ENCODE measurements at regions of chr5 and their contacts with region 1.

Region 1: GRCh38 chr5:134851307-134851923 is 5.6 kb downstream of the C5orf24 start:
- DNase-seq: peak; percentile 81
- H3K4me3 Mint-ChIP-seq: no peak overlapping the region
- H3K27ac Mint-ChIP-seq: peak overlapping the region; percentile 18
- H3K4me1 Mint-ChIP-seq: peaks cover 7% of the 10 kb centered on the region
- H3K27me3 Mint-ChIP-seq: no peaks in the 10 kb centered on the region
- CTCF ChIP-seq: peak; percentile 58

Region 2: DNA sequence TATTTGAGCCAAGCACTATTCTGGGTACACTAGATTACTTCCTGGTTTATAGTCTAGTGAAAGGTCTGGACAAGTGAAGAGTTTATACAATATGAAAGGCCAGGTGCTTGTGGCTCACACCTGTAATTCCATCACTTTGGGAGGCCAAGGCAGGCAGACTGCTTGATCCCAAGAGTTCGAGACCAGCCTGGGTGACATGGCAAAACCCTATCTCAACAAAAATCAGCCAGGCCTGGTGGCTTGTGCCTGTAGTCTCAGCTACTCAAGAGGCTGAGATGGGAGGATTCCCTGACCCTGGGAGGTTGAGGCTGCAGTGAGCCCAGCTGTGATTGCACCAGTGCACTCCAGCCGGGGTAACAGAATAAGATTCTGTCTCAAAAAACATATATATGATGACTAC is 13.3 kb after region 1 on chr5:
- CTCF ChIA-PET with region 1: interaction called, 13 read pairs
- POLR2A ChIA-PET with region 1: interaction called, 13 read pairs
- intact Hi-C with region 1: no loop called
- DNase-seq: no peak
- H3K4me3 Mint-ChIP-seq: no peak overlapping the region
- H3K27ac Mint-ChIP-seq: no peak overlapping the region
- H3K4me1 Mint-ChIP-seq: no peaks in the 10 kb centered on the region
- H3K27me3 Mint-ChIP-seq: no peaks in the 10 kb centered on the region
- CTCF ChIP-seq: no peak

Region 3: DNA sequence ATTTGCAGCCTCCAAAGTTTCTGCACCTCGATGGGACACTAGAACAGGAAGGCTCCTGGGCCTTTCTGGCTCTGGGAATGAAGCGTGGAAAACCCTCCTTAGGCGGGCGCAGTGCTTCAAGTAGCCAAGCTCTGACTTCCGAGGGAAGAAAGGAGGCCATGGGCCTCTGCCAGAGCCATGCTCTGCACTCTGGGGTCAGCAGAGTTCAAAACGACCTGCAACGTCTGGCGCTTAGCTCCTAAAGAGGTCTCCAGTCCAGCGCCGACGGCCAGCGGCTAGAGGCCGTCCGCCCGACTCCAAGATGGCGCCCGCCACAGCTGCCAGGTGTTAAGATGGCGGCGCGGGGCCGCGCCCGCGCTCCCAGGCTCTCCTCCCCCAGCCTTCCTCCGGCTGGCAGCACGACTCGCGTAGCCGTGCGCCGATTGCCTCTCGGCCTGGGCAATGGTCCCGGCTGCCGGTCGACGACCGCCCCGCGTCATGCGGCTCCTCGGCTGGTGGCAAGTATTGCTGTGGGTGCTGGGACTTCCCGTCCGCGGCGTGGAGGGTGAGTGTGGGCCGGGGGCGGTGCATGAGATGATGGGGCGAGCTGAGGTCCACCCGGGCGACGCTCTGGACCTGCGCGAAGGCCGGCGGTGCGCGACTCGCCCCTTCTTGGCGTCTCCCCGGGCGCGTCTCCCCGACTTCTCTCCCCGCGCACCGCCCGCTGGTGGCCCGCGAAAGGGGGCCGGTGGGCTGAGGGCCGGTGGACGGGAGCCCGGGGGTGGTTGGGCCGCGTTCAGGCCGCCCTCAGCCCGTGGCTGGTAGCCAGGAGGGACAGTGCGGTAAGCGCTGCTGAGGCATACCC is 22.8 kb after region 1 on chr5 and contains the start of gene TXNDC15:
- CTCF ChIA-PET with region 1: interaction called, 7 read pairs
- POLR2A ChIA-PET with region 1: interaction called, 16 read pairs
- intact Hi-C with region 1: no loop called
- DNase-seq: peak; percentile 87
- H3K4me3 Mint-ChIP-seq: peak within 1 kb of the TSS; percentile 98
- H3K27ac Mint-ChIP-seq: peak within 1 kb of the TSS; percentile 97
- H3K4me1 Mint-ChIP-seq: peaks cover 28% of the 10 kb centered on the region
- H3K27me3 Mint-ChIP-seq: no peaks in the 10 kb centered on the region
- CTCF ChIP-seq: no peak
- total RNA-seq, gene TXNDC15: 57.0 and 66.0 TPM in 2 replicates